ENCODE measurements at regions of chr7 and their contacts with region 1.

Region 1: DNA sequence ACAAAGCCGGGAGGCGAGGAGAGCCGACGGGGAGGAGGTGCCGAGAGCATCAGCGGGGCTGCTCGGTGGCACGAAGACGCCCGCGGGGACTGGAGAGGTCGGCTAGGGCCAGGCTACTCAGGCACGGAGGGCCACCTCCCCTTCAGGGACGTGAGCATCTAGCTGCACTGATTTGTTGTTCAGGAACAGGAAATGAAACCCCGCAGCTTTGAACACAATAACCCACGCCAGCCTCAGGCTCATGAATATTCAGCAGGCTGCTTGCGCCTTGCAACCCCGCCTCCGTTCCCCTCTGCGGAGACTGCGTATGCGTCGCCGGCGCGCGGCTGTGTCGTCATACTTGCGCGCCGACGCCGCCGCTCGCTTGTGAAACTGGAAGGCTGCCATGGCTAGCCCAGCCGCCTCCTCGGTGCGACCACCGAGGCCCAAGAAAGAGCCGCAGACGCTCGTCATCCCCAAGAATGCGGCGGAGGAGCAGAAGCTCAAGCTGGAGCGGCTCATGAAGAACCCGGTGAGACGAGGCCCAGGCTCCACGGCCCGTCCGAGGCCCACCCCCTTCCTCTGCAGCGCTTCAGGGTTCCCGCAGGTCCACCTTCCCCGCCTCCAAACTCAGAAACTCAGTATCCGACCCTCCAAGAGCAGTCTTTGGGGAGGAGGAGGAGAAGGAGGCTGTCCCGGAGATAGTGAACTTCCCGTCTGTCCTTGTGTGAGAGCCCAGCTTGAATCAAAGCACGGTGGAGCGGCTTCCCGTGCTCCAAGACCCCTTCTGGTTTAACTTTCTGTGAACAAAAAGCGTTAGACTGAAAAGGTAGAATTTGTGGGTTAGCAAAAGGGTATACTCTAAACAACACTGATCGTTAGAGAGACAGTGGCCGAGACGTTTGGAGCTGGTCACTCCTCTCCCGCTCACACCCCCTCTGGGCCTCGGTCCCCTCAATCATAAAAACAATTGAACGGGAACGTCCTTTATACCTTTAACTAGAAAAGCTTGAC is at the start of gene PRKRIP1:
- DNase-seq: peak; percentile 86 to 96 (median 91)
- H3K4me3 ChIP-seq: peak within 1 kb of the TSS; percentile 67 to 99
- H3K4me3 Mint-ChIP-seq: peak within 1 kb of the TSS; percentile 96 to 99 (median 96)
- H3K27ac ChIP-seq: peak within 1 kb of the TSS; percentile 91
- H3K27ac Mint-ChIP-seq: peak within 1 kb of the TSS; percentile 91 to 99 (median 98)
- H3K4me1 ChIP-seq: peaks cover 17% of the 10 kb centered on the region
- H3K4me1 Mint-ChIP-seq: peaks cover 15 to 30% (median 19%) of the 10 kb centered on the region in 4 donors
- H3K27me3 ChIP-seq: no peaks in the 10 kb centered on the region
- H3K27me3 Mint-ChIP-seq: no peaks in the 10 kb centered on the region
- total RNA-seq, gene PRKRIP1: 43.2 to 47.6 TPM

Region 2: GRCh38 chr7:102260856-102261255 is 135.5 kb before region 1 on chr7:
- CTCF ChIA-PET with region 1: no interaction called
- POLR2A ChIA-PET with region 1: no interaction called
- intact Hi-C with region 1: no loop called
- DNase-seq: no peak
- H3K4me3 ChIP-seq: no peak overlapping the region
- H3K4me3 Mint-ChIP-seq: no peak overlapping the region
- H3K27ac ChIP-seq: no peak overlapping the region
- H3K27ac Mint-ChIP-seq: peak overlapping the region in 1 of 7 donors; percentile 17
- H3K4me1 ChIP-seq: no peaks in the 10 kb centered on the region
- H3K4me1 Mint-ChIP-seq: no peaks in the 10 kb centered on the region
- H3K27me3 ChIP-seq: no peaks in the 10 kb centered on the region
- H3K27me3 Mint-ChIP-seq: no peaks in the 10 kb centered on the region

Region 3: DNA sequence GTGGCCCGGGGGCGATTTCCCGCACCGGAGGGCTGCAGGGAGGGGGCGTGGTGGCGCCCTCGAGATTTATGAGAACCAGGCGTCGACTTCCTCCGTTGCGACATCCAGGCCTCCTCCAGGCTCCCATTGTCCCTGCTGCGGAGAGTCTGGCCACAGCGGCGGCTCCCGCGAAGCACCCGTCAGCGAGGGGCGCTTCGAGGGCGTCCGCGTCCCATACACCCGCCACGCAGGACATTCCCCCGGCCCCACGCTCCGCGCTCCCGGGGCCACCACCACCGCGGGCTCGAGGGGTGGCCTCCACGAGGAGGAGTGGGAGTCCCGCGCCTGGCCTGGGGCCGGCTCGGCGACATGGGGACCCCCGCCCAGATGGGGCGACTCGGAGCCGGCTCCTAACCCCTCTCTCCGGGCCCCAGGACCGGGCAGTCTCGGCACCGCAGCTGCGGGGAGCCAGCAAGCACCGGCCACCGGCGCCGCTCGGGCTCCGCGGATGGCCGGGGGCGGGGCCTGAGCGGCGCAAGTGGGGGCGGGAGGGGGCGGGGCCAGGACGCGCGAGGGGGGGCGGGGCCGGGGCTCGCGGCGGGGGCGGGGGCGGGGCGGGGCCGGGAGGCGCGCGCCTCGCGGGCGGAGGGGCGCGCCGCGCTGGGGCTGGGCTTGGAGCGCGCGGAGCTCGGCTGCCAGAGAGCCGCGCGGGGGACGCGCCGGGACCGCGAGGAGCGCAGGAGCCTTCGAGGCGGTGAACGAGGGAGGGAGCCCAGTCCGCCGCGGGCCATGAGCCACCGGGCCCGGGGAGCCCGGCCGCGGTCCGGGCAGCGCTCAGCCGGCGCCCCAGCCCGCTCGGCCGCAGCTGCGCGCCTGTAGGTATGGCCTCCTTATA is 109.8 kb before region 1 on chr7 and contains the start of gene SH2B2:
- CTCF ChIA-PET with region 1: interaction called, 59 read pairs
- POLR2A ChIA-PET with region 1: interaction called, 10 read pairs
- intact Hi-C with region 1: no loop called
- DNase-seq: peak; percentile 43 to 58 (median 50)
- H3K4me3 ChIP-seq: peak within 1 kb of the TSS; percentile 29 to 68
- H3K4me3 Mint-ChIP-seq: peak within 1 kb of the TSS; percentile 70 to 86 (median 78)
- H3K27ac ChIP-seq: peak within 1 kb of the TSS; percentile 38
- H3K27ac Mint-ChIP-seq: peak within 1 kb of the TSS in 3 of 7 donors; percentile 42 to 85 (median 55)
- H3K4me1 ChIP-seq: peaks cover 35% of the 10 kb centered on the region
- H3K4me1 Mint-ChIP-seq: peaks cover 19 to 45% (median 29%) of the 10 kb centered on the region in 4 donors
- H3K27me3 ChIP-seq: no peaks in the 10 kb centered on the region
- H3K27me3 Mint-ChIP-seq: peaks cover 0 to 2% of the 10 kb centered on the region in 2 donors
- total RNA-seq, gene SH2B2: 0.79 to 1.2 TPM

Region 4: DNA sequence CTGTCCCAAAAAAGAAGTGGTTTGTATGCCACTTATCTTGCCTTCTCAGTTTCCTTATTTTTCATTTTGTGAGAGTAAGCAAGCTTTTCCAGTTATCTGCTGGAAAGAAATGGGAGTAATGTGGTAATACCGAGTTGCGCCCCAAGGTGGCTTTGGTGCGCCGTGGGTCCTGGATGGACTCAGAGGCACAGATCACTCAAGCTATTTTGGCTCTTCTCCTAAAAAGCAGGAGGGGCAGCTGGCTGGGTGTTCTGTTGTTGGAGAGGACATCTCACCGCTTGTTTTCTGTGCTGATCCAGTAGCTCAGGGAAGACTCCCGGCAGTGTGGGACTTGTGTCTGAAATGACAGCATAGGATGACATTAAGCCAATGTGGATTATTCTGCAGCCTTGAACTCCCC is 16.2 kb after region 1 on chr7:
- CTCF ChIA-PET with region 1: interaction called, 9 read pairs
- POLR2A ChIA-PET with region 1: interaction called, 20 read pairs
- intact Hi-C with region 1: no loop called
- DNase-seq: peak in 4 of 5 donors; percentile 42 to 56 (median 44)
- H3K4me3 ChIP-seq: no peak overlapping the region
- H3K4me3 Mint-ChIP-seq: no peak overlapping the region
- H3K27ac ChIP-seq: no peak overlapping the region
- H3K27ac Mint-ChIP-seq: peak overlapping the region; percentile 53 to 92 (median 78)
- H3K4me1 ChIP-seq: peaks cover 37% of the 10 kb centered on the region
- H3K4me1 Mint-ChIP-seq: peaks cover 24 to 41% (median 31%) of the 10 kb centered on the region in 4 donors
- H3K27me3 ChIP-seq: no peaks in the 10 kb centered on the region
- H3K27me3 Mint-ChIP-seq: no peaks in the 10 kb centered on the region

Region 5: GRCh38 chr7:102425639-102426267 is 29.4 kb after region 1 on chr7:
- CTCF ChIA-PET with region 1: interaction called, 5 read pairs
- POLR2A ChIA-PET with region 1: interaction called, 37 read pairs
- intact Hi-C with region 1: loop called (anchors 2 kb)
- DNase-seq: peak; percentile 80 to 94 (median 84)
- H3K4me3 ChIP-seq: peak overlapping the region; percentile 48 to 49
- H3K4me3 Mint-ChIP-seq: peak overlapping the region; percentile 83 to 92 (median 87)
- H3K27ac ChIP-seq: peak overlapping the region; percentile 98
- H3K27ac Mint-ChIP-seq: peak overlapping the region; percentile 100
- H3K4me1 ChIP-seq: peaks cover 83% of the 10 kb centered on the region
- H3K4me1 Mint-ChIP-seq: peaks cover 39 to 75% (median 56%) of the 10 kb centered on the region in 4 donors
- H3K27me3 ChIP-seq: no peaks in the 10 kb centered on the region
- H3K27me3 Mint-ChIP-seq: no peaks in the 10 kb centered on the region

Region 6: DNA sequence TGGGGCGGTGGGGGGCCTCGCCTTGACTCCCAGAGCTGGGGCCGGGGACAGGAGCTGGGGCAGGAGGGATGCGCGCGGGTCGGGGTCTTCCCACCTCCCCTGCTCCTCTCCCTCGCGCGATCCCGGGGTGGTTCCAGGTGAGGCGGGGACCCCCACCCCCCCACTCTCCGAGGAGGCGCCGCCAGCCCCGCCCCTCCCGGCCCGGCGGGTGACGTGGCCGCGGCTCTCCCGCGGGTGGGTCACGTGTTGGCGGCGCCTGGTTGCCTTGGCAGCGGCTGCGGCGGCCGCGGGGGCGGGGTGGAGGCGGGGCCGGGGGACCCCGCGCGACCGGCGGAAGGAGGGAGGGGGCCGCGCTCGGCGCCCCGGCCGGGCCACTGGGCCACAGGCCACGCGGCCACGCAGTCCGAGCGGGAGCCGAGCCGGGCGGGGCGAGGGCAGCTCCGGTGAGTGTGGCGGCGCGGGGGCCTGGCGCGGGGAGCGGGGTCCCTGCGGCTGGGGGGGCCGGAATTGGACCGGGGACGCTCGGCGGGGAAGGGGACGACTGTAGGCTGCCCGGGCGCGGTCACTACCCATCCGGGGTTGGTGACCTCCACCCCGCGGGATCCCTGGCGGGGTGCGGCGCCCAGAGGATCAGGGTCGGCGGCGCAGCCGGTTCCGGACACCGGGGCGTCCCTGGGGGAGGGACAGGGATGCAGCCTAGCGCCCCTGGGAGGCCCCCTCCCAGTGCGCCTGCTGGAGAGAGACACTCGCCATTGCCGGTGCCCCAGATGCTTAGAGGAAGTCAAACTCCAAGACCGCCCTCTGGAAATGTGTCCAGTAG is 37.1 kb after region 1 on chr7 and contains the start of gene ORAI2:
- CTCF ChIA-PET with region 1: interaction called, 7 read pairs
- POLR2A ChIA-PET with region 1: interaction called, 27 read pairs
- intact Hi-C with region 1: no loop called
- DNase-seq: peak; percentile 81 to 86 (median 84)
- H3K4me3 ChIP-seq: peak within 1 kb of the TSS; percentile 74 to 76
- H3K4me3 Mint-ChIP-seq: peak within 1 kb of the TSS; percentile 80 to 90 (median 88)
- H3K27ac ChIP-seq: peak within 1 kb of the TSS; percentile 88
- H3K27ac Mint-ChIP-seq: peak within 1 kb of the TSS; percentile 98 to 100 (median 100)
- H3K4me1 ChIP-seq: peaks cover 61% of the 10 kb centered on the region
- H3K4me1 Mint-ChIP-seq: peaks cover 26 to 62% (median 43%) of the 10 kb centered on the region in 4 donors
- H3K27me3 ChIP-seq: no peaks in the 10 kb centered on the region
- H3K27me3 Mint-ChIP-seq: no peaks in the 10 kb centered on the region
- total RNA-seq, gene ORAI2: 29.0 to 31.6 TPM